Right ventricle myocardium superior (tissue), 1 donor: ENCODE measurements at regions of chr7 and their contacts with region 1.

Region 1: DNA sequence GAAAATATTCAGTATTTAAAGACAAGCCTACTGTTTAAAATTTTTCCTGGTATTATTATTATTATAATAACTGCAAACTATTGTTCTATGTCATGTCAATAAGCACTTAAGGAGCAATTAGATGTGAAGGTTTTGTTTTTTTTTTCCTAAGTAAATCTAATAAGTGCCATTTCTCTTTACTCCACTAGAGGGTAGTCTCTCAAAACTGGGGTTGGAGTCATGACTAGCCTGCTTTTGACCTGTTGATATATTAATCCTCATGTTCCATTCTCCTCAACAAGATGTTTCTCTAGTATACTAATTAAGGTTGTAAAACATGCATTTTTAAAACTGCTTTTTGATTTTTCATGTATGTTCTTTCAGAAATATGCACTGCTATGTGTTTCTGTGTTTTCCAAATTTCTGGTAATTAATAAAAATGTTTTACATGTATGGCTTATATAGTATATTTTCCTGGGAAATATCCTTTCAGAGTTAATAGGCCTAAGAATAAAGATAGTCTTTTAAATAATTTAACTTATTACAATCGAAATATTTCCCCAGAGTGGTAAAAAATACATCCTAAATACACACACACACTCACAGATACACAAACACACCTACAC is 1.0 kb upstream of the LRRN3 start:
- DNase-seq: no peak
- ATAC-seq: peak; percentile 73

Region 2: DNA sequence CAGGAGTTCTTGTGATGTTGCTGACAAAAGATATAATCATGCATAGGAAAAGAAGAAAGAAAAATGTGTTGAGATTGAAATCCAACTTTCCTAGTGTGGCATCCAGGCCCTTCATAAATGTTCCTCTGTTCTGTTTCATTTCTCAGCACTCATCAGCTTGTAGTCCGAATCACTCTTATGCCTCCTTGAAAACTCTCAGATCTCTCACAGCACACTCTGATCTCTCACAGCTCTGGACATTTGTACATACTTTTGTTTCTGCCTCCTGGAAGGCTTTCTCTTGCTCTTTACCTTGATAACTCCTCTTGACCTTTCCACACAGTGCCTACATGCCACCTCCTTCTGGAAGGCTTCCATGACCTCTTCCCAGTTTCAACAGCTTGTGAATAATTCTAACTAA is 408.0 kb before region 1 on chr7:
- intact Hi-C with region 1: loop called (anchors 5 kb)
- DNase-seq: no peak
- ATAC-seq: peak; percentile 82

Region 3: DNA sequence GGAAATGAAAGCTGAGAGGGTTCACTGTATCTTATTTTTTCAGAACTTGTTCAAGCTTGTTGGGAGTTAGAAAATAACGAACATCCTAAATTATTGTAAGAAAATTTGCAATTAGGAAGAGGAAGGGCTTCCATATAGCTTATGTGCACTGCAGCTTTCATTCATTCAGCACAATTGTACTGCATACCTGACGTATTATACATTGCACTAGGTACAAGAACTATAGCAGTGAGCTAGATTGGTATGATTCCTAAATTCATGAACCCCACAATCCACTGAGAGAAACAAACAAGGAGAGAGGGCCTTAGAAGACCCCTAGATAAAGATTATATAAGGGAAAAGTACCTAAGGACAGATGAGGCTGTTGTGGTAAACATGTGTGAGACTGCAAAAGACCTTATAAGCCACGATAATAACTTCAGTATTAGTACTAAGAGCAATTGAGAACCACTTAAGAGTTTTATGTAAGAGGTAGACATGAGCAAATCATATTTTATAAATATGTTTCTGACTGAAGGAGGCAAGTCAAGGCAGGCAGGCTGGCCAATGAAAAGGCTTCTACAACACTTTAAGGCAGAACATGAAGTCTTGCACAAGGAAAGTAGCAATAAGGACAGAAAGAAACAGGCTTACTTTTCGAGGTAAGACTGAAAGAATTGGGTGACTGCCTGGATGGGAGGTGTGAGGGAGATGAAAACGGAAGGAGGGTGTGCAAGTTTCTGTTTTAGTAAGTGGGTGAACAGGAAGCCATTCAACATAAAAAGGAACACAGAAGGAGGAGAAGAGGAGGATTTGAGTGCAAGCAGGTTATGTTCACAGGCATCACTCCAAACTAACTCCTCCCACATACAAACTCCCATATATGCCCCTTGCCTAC is 76.9 kb before region 1 on chr7:
- intact Hi-C with region 1: no loop called
- DNase-seq: no peak
- ATAC-seq: peak; percentile 29

Region 4: GRCh38 chr7:111486472-111487142 is 396.7 kb after region 1 on chr7:
- intact Hi-C with region 1: loop called (anchors 10 kb)
- DNase-seq: no peak
- ATAC-seq: peak; percentile 62